Spleen (tissue), 13 donors: ENCODE measurements at regions of chr6 and their contacts with region 1.

Region 1: DNA sequence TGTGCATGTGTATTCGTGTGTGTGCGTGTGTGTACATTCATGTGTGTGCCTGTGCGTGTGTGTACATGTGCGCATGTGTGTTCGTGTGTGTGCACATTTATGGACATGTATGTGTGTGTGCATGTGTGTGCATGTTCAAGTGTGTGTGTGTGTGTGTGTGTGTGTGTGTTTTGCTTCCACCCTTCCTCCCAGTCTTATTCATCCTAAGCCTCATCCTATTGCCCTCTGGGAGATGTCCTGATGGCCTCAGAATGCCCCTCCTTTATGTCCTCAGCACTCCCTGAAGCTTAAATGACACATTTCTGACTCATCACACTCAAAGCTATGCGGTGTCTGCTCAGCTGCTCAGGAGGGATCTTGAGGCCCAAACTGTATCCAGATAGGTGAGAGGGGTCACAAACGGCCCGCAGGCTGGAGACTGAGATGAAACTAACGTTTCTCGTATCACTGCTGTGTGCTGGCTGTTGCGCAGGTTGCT is 76.7 kb upstream of the CCDC167 start:
- DNase-seq: no peak
- H3K4me3 ChIP-seq: no peak overlapping the region
- H3K27ac ChIP-seq: no peak overlapping the region
- H3K4me1 ChIP-seq: no peaks in the 10 kb centered on the region
- H3K27me3 ChIP-seq: peaks cover 0 to 4% (median 0%) of the 10 kb centered on the region in 7 donors
- CTCF ChIP-seq: no peak
- POLR2A ChIP-seq: no peak

Region 2: DNA sequence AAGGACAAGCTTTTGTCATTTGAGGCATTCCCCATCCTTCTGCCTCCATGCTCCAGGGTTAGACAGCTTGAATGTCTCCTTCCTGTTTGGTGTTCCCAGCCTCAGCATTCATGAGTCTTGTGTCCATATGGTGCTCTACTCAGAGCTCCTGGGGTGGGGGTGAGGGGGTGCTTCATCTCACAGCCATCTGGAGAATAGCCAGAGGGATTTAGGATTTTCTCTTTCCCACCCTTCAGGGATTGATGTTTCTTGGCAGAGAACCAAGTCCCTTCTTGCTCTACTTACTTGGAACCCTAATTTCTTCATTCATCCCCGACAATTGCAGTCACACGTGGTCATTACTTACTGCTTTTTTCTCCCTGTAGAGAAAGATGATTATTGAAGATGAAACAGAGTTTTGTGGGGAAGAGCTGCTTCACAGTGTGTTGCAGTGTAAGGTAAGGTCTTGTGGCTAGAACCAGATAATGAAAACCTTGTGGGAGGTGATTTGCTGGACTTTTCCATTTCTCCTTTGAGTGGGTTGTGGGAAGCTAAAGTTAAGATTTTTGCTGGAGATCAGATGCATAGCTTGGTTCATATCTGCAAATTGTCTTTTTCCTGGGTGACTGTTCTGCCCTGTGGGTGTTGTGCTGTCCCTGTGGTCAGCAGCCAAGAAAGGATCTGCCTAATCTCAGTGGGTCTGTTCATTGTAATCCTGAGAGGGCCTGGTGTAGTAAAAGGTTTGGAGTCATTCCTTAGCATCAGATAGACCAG is 124.8 kb before region 1 on chr6:
- intact Hi-C with region 1: no loop called
- DNase-seq: no peak
- H3K4me3 ChIP-seq: no peak overlapping the region
- H3K27ac ChIP-seq: no peak overlapping the region
- H3K4me1 ChIP-seq: peaks cover 0 to under 1% (median 0%) of the 10 kb centered on the region in 6 donors
- H3K27me3 ChIP-seq: no peaks in the 10 kb centered on the region
- CTCF ChIP-seq: no peak
- POLR2A ChIP-seq: no peak

Region 3: GRCh38 chr6:37679539-37680476 is 103.4 kb after region 1 on chr6:
- intact Hi-C with region 1: loop called (anchors 10 kb)
- DNase-seq: no peak
- H3K4me3 ChIP-seq: peak overlapping the region in 1 of 8 donors; percentile 23
- H3K27ac ChIP-seq: peak overlapping the region in 4 of 8 donors; percentile 13 to 73 (median 40)
- H3K4me1 ChIP-seq: peaks cover 0 to 31% (median 12%) of the 10 kb centered on the region in 6 donors
- H3K27me3 ChIP-seq: no peaks in the 10 kb centered on the region
- CTCF ChIP-seq: peak in 1 of 11 experiments; percentile 19
- POLR2A ChIP-seq: no peak